GM18951 (cell line): ENCODE measurements at regions of chr1 and their contacts with region 1.

Region 1: GRCh38 chr1:203340112-203340804 is 10.7 kb downstream of the FMOD start:
- POLR2A ChIP-seq: no peak

Region 2: DNA sequence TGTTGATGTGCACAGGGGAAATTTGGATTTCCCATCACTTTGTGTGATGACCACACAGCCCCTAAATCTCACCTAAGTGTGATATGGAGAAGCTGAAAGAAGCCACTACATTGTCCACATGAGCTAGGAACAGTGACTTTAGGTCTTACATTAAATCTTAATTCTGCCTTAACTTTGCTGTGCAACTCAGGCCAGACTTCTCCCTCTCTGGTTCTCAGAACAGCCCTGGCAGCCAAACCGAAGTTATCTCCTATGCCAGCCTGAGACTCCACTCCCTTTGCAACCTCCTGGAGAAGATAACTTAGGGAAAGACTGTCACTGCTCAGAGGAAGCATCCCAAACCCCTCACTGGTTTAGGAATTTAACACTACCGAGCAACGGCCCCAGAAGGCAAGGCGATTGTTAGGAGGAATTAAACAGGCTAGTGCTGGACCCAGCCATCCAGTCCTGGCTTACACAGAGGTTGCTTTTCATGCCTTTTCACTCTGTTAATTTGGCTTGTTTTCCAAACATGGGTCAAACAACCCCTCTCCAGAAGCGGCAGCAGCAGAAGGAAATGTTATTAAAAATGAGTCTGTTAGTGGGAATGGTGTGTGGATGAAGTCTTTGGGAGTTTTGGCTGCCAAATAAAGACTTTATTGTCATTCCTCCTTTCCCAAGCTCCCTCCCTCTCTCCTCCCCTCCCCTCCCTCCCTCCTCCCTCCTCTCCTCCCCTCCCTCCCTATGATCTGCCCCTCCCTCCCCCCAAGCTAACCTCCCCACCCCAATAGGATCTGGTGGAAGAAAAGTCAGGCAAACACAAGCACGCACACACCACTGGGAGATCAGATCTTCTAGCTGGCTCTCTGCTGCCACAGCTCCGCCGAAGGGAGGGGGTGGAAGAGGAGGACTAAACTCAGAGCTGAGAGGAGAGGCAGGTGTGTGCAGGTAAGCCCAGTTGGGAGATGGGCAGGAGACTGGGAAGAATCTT is 135.0 kb after region 1 on chr1 and contains the start of gene PRELP:
- in situ Hi-C with region 1: loop called (anchors 10 kb)
- POLR2A ChIP-seq: no peak